ENCODE measurements at regions of chr20 and their contacts with region 1.

Region 1: DNA sequence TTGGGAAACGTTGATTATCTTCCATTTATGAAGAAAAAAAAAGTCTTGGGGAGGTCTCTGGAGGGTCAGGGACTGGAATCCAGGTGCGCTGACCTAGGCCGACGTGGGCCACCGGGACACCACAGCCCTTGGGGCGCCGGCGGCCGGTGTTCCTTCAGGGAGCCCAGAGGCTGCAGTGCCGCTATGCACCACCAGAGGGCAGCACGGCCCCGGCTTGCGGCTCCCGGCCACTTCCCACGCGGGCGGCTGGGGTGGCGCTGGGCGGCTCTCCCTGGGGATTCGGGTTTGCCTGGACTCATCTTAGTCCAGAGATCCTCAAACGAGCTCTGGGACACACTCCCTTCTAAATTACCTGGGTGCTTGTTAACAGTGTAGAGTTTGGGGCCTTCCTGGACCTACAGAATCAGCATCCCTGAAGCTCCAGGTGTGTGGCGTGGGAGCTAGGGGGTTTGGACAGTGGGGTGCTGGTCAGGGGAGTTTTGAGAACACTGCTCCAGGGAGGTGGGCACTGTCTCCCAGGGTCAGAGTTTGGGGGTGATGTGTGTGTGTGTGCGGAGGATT is 23.0 kb upstream of the GTSF1L start:
- DNase-seq: peak; percentile 88
- H3K4me3 Mint-ChIP-seq: no peak overlapping the region
- H3K27ac Mint-ChIP-seq: peak overlapping the region; percentile 54
- H3K4me1 Mint-ChIP-seq: peaks cover 44% of the 10 kb centered on the region
- H3K27me3 Mint-ChIP-seq: no peaks in the 10 kb centered on the region

Region 2: GRCh38 chr20:43345676-43346075 is 404.1 kb before region 1 on chr20:
- CTCF ChIA-PET with region 1: no interaction called
- intact Hi-C with region 1: no loop called
- DNase-seq: no peak
- H3K4me3 Mint-ChIP-seq: no peak overlapping the region
- H3K27ac Mint-ChIP-seq: no peak overlapping the region
- H3K4me1 Mint-ChIP-seq: no peaks in the 10 kb centered on the region
- H3K27me3 Mint-ChIP-seq: peaks cover 13% of the 10 kb centered on the region

Region 3: DNA sequence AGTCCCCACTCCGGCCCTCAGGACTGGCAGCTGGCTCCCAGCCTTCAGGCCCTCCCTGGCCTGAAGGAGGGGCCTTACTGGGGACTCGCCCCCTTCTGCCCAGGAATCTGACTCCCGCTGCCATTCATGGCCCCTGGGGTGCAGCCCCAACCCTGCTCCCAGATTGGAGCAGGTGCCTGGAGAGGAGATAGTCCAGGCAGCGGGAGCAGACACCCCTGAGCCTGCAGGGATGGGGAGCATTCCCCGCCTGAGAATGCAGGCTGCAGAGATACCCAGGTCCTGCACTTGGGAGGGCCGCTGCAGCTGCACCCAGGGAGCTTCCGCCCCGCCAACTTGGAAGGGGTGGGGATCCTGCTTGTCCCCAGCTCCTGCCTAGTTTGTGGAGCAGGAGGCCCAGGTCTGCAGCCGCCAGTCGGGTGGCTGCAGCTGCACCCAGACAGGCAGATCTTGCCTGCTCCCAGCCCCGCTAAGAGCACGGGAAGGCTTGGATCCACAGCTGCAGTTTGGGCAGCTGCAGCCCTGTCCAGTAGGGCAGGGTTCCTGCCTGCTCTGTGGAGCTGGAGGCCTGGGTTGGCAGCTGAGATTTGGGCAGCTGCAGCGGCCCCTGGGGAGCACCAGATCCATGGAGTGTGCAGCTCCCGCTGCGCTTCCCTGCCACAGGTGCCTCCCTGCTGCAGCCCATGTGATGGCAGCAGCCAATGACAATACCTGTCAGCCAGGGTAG is 28.2 kb before region 1 on chr20:
- CTCF ChIA-PET with region 1: interaction called, 10 read pairs
- intact Hi-C with region 1: loop called (anchors 1 kb)
- DNase-seq: no peak
- H3K4me3 Mint-ChIP-seq: peak overlapping the region; percentile 72
- H3K27ac Mint-ChIP-seq: peak overlapping the region; percentile 60
- H3K4me1 Mint-ChIP-seq: peaks cover 59% of the 10 kb centered on the region
- H3K27me3 Mint-ChIP-seq: no peaks in the 10 kb centered on the region

Region 4: DNA sequence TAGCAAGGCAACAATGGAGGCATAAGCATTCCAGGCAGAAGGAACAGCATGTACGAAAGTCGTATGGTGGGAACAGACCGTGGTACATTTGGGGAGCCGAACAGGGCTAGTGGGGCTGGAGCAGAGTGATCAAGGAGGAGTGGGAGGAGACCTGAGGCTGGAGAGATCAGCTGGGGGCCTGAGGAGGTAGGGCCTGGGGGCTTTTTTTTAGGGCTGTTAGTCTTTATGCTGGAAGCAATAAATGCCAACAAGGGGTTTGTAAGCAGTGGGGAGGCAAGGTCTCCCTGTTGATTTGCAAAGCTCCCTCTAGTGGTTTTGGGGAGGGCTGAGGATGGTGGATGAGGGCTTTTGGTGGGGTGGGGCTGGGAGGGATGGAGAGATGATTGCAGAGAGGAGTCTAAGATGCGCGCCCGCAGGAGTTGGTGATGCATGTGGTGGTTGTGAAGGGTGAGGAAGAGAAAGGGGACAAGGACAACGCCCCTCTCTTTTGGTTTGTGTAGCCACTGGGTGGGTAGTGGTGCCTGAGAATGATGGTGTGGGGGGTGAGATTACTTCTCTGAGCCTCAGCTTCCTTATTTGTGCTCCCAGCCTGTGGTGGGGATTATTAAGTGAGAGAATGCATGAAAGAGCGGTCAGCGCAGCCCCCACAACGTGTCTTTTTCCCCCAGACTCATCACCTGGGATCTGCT is 90.7 kb after region 1 on chr20:
- CTCF ChIA-PET with region 1: interaction called, 19 read pairs
- intact Hi-C with region 1: loop called (anchors 1 kb)
- DNase-seq: peak; percentile 60
- H3K4me3 Mint-ChIP-seq: no peak overlapping the region
- H3K27ac Mint-ChIP-seq: no peak overlapping the region
- H3K4me1 Mint-ChIP-seq: peaks cover 16% of the 10 kb centered on the region
- H3K27me3 Mint-ChIP-seq: no peaks in the 10 kb centered on the region

Region 5: GRCh38 chr20:43975096-43975768 is 225.4 kb after region 1 on chr20:
- CTCF ChIA-PET with region 1: interaction called, 8 read pairs
- intact Hi-C with region 1: loop called (anchors 1 kb)
- DNase-seq: peak; percentile 66
- H3K4me3 Mint-ChIP-seq: no peak overlapping the region
- H3K27ac Mint-ChIP-seq: peak overlapping the region; percentile 66
- H3K4me1 Mint-ChIP-seq: peaks cover 25% of the 10 kb centered on the region
- H3K27me3 Mint-ChIP-seq: no peaks in the 10 kb centered on the region

Region 6: DNA sequence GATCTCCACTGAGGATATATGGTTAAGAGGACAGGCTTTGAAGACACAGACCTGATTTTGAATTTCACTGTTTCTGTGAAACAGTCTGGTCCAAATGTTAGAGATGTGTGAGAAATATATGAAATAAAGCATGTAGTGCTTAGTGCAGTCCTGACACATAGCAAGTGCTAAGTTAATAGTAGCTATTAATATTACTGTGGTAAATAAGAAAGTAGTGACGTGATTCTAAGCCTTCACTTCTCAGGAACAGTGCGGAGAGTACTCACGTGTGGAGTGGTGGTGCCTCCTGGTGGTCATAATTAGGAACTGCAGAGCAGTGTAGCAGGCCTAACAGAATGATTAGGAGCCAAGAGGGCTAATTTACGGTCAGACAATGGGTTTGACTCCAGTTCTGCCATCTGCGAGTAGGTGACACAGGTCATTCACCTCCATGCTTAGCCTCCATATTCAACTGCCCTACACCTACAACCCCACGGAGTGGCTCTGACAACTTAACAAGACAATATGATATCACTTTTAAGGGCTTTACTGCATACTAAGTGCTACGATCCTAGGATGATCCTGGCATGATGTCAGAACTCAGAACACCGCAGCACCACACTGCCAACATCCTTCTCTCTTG is 330.9 kb after region 1 on chr20:
- CTCF ChIA-PET with region 1: interaction called, 79 read pairs
- intact Hi-C with region 1: loop called (anchors 1 kb)
- DNase-seq: peak; percentile 88
- H3K4me3 Mint-ChIP-seq: no peak overlapping the region
- H3K27ac Mint-ChIP-seq: no peak overlapping the region
- H3K4me1 Mint-ChIP-seq: peaks cover 13% of the 10 kb centered on the region
- H3K27me3 Mint-ChIP-seq: no peaks in the 10 kb centered on the region

Region 7: DNA sequence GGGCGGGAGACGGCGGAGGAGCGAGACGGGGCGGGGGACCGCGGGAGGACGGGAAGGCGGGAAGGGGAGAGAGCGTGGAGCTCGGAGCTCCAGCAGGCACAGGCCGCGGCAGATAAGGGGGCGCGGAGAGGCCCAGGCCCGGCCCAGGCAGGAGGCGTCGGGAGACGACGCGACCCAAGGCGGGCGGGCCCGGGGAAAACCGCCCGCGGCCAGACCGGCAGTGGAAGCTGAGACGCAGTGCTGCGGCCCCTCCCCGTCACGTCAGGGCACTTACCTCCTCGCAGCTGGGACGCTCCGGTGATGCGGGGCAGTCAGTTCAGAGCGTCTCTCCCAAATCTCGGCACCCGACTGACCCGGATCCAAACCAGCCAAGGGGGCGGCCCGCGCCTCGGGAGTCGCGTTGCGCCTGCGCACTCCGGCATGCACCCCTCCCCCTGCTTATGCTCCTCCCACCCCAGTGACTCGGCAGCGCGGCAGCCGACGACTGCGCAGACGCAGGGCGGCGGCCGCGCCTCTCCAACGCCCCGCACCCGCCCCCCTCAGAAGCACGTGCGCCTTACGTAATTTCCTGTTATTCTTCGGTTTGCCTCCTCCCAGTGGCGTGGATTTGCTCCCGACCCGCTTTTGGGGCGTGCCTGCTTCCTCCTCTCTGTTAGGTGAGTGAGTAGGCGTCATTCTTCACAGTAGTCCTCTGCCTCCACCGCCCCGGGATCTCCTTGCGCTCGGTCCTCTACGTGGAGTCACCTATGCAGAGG is 460.8 kb after region 1 on chr20 and contains the start of gene OSER1:
- CTCF ChIA-PET with region 1: no interaction called
- intact Hi-C with region 1: loop called (anchors 5 kb)
- DNase-seq: peak; percentile 99
- H3K4me3 Mint-ChIP-seq: peak within 1 kb of the TSS; percentile 94
- H3K27ac Mint-ChIP-seq: peak within 1 kb of the TSS; percentile 92
- H3K4me1 Mint-ChIP-seq: peaks cover 61% of the 10 kb centered on the region
- H3K27me3 Mint-ChIP-seq: no peaks in the 10 kb centered on the region
- total RNA-seq, gene OSER1: 27.7 to 28.4 TPM

Measured in activated naive CD4-positive, alpha-beta T cell treated with anti-CD3 and anti-CD28 coated beads for 36 hours (primary cell).